ENCODE measurements at regions of chr1 and their contacts with region 1.

Region 1: DNA sequence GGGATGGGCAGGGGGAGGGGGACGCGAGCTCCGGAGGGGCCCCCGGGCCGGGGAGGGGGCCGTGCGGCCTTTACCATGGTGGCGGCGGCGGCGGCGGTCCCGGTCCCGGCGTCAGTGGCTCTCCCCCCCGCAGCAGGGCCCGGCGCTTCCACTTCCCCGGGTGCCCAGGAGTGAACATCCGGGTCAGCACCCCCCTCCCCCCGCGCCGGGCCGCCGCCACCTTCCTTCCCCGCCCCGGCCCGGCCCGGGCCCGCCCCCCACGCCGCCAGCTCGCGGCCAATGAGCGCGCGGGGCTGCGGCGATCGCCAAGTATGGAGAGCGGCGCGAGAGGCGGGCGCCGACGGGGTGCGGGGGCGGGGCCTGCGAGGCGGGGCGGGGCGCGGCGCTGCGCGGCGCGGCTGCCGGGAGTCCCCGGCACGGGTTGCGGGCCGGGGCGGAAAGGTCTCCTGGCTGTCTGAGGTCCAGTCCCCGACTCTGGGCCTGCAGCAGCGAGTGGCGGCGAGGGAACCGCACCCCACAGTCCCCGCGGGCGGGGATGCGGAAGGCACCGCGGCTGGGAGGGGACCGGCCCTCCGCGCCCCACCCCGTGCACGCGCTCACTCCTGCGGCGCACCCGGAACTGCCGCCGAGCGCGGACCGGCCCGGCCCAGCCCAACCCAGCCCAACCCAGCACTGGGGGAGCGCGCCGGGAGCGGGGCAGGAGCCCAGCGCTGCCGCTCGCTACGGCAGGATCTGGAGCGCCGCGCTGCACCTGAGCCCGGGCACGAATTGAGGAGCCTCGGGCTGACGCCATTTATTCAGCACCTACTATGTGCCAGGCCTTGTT is at the start of gene CAPZB:
- DNase-seq: peak; percentile 95
- ATAC-seq: peak; percentile 91
- H3K4me3 Mint-ChIP-seq: peak within 1 kb of the TSS; percentile 96
- H3K27ac Mint-ChIP-seq: peak within 1 kb of the TSS; percentile 95
- H3K4me1 Mint-ChIP-seq: peaks cover 52% of the 10 kb centered on the region
- H3K27me3 Mint-ChIP-seq: no peaks in the 10 kb centered on the region
- total RNA-seq, gene CAPZB: 411 to 427 TPM

Region 2: DNA sequence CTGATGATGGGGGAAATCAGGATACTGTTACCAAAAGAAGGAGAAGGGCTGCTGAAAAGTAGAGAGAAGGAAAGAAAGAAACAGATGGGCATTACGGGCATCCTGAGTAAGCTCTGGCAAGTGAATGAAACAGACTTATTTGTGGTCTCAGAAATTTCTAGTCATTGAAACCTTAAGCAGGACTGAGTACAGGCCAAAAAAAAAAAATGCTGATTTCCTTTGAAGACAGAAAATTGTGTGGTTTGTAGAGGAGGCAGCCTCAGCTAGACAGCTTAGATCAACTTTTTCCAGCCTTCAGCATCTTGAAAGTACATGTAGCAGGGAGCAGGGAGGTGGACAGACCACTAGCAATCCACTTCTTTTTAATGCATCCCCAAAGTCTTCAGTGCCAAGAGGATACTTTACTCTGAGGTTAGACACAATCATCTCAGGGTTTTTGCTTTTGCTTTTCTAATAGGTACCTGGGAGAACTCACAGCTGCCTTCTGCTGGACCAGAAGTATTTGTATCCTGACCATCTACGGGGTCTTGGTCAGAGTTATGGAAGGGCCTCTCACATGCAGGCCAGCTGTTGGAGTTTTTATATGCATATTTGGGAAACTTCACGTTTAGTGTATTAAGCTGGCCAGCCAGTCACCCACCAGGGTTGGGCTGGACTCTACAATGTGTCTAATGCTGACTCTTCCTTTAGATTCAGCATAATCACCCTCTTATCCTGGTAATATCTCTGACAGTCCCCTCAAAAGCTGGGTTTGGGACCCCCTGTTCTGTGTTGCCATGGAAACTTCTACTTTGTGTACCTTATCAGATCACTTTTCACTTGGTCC is 10.4 kb after region 1 on chr1:
- CTCF ChIA-PET with region 1: interaction called, 13 read pairs
- DNase-seq: no peak
- ATAC-seq: no peak
- H3K4me3 Mint-ChIP-seq: no peak overlapping the region
- H3K27ac Mint-ChIP-seq: no peak overlapping the region
- H3K4me1 Mint-ChIP-seq: peaks cover 27% of the 10 kb centered on the region
- H3K27me3 Mint-ChIP-seq: no peaks in the 10 kb centered on the region

Measured in activated CD8-positive, alpha-beta memory T cell treated with anti-CD3 and anti-CD28 coated beads, Interleukin-2, amount 10 ng/mL, durations not matched to agents 7 days and 5 days (primary cell).